ENCODE measurements at regions of chr3 and their contacts with region 1.

Region 1: DNA sequence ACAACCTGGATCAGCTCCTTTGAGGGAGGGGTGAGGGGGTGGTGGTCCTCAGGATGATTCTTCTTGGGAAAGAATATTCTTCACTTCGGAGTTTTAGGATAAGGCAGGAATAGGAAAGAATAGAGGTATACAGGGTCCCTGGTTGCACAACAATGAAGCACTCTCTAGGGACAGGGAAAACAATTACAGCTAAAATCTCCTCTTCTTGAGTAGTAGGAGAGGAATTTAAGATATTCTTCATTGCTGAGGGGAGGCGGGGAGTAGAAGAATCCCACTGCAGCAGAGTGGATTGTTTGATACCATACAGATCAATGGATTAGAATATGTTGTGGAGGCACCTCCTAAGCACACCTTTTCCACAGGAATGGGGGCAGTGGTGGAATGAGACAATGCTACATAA is 20.5 kb downstream of the SLC9C1 start:
- DNase-seq: no peak
- ATAC-seq: no peak
- H3K4me3 ChIP-seq: no peak overlapping the region
- H3K27ac ChIP-seq: no peak overlapping the region
- H3K4me1 ChIP-seq: no peaks in the 10 kb centered on the region
- H3K27me3 ChIP-seq: peaks cover 6% of the 10 kb centered on the region
- CTCF ChIP-seq: no peak
- POLR2A ChIP-seq: no peak
- RAD21 ChIP-seq: no peak

Region 2: DNA sequence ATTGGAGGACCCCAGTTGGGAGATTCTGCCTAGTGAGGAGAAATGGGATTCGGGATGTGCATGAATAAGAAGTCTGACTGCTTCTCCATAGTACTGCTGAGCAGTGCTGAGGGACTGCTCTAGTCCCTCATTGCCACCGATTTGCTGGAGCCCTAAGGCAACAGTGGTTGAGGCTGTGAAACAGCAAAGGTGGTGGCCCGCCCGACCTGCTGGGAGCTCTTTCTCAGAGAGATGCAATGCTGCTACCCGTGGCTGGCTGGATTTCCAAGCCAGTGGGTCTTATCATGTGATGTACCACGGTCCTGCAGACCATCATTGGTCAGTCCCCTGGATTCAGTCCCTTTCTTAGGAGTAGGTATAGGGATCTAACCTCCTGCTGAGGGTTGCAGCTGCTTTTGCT is 97.9 kb before region 1 on chr3:
- CTCF ChIA-PET with region 1: no interaction called
- POLR2A ChIA-PET with region 1: no interaction called
- dilution Hi-C with region 1: no loop called
- in situ Hi-C with region 1: no loop called
- intact Hi-C with region 1: no loop called
- DNase-seq: no peak
- ATAC-seq: no peak
- H3K4me3 ChIP-seq: no peak overlapping the region
- H3K27ac ChIP-seq: no peak overlapping the region
- H3K4me1 ChIP-seq: no peaks in the 10 kb centered on the region
- H3K27me3 ChIP-seq: no peaks in the 10 kb centered on the region
- CTCF ChIP-seq: no peak
- POLR2A ChIP-seq: no peak
- RAD21 ChIP-seq: no peak

Region 3: GRCh38 chr3:112247900-112248299 is 25.6 kb before region 1 on chr3:
- CTCF ChIA-PET with region 1: no interaction called
- POLR2A ChIA-PET with region 1: no interaction called
- dilution Hi-C with region 1: no loop called
- in situ Hi-C with region 1: no loop called
- intact Hi-C with region 1: no loop called
- DNase-seq: no peak
- ATAC-seq: no peak
- H3K4me3 ChIP-seq: no peak overlapping the region
- H3K27ac ChIP-seq: no peak overlapping the region
- H3K4me1 ChIP-seq: no peaks in the 10 kb centered on the region
- H3K27me3 ChIP-seq: no peaks in the 10 kb centered on the region
- CTCF ChIP-seq: no peak
- POLR2A ChIP-seq: no peak
- RAD21 ChIP-seq: no peak

Region 4: GRCh38 chr3:112261742-112262141 is 11.8 kb before region 1 on chr3:
- CTCF ChIA-PET with region 1: no interaction called
- POLR2A ChIA-PET with region 1: no interaction called
- dilution Hi-C with region 1: no loop called
- in situ Hi-C with region 1: no loop called
- intact Hi-C with region 1: loop called (anchors 1 kb)
- DNase-seq: no peak
- ATAC-seq: no peak
- H3K4me3 ChIP-seq: no peak overlapping the region
- H3K27ac ChIP-seq: no peak overlapping the region
- H3K4me1 ChIP-seq: no peaks in the 10 kb centered on the region
- H3K27me3 ChIP-seq: no peaks in the 10 kb centered on the region; the same call in 1 of the 2 replicates
- CTCF ChIP-seq: no peak
- POLR2A ChIP-seq: no peak
- RAD21 ChIP-seq: no peak

Region 5: DNA sequence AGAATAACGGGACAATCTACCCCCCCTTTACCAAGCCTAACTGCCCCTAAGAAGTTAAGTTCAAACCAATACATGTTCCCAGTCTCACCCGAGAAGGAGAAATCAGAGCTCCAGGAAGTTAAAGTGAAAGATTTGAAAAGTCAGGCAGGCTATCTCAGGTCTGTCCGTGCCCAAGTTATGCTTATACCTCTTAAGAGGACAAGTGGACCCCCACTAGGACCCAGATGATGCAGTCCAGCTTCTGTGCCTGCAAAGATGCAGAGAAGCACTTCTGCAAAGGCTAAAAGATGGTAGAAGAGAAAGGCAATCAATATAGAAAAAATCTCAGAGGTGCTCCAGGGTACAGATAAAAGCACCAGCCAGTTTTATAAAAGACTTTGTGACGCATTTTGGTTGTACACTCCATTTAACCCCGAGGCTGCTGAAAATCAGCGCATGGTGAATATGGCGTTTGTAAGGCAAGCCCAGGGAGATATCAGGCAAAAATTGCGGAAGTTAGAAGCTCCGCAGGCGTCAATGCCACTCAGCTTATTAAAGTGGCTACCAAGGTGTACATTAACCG is 30.3 kb after region 1 on chr3:
- CTCF ChIA-PET with region 1: no interaction called
- POLR2A ChIA-PET with region 1: no interaction called
- dilution Hi-C with region 1: no loop called
- in situ Hi-C with region 1: no loop called
- intact Hi-C with region 1: no loop called
- DNase-seq: peak; percentile 28
- ATAC-seq: peak; percentile 64
- H3K4me3 ChIP-seq: peak overlapping the region; percentile 27; the same call in 1 of the 2 replicates
- H3K27ac ChIP-seq: no peak overlapping the region
- H3K4me1 ChIP-seq: peaks cover 12% of the 10 kb centered on the region
- H3K27me3 ChIP-seq: no peaks in the 10 kb centered on the region
- CTCF ChIP-seq: no peak
- POLR2A ChIP-seq: no peak
- RAD21 ChIP-seq: no peak

Region 6: DNA sequence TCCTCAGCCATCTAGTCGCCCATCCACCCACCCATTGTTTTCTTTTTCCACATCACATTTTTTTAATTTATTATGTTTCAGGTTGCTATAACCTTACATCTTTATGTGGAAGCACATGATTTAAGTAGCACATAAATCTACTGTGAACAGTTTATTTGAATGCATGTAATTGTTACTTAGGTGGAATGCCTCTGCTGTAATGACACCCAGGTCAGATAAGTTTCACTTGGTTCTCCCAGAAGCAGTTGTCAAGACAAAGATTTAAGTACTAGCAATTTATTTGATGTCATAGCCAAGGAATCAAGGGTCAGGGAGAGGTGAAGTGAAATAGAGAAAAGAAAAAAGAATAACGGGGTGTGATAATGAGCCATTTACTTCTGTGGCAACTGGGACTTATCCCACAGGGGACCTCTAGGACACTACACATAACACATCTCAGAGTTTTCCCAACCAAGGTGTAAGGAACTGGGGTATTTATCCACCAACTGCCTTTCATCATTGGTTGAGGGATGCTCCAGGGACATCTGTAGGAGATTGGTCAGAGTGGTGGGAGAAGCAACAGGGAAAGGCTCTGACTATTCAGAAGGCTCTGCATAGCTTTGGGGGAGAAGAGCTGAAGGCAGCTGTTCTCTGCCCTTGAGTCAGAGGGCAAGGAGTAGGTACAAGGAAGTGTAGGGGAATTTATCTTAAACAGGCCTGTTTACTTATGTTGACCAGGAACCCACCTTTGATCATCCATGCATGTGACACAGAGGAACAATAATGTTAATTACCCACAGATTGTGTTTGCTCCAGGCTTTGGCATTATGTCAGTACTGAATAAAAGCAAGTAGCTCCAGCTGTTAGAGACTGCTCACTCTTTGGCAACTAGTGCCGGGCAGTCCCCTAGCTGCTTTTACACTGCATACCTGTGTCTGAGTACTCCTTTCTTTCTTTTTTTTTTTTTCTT is 478.3 kb after region 1 on chr3:
- CTCF ChIA-PET with region 1: no interaction called
- POLR2A ChIA-PET with region 1: no interaction called
- dilution Hi-C with region 1: no loop called
- in situ Hi-C with region 1: no loop called
- intact Hi-C with region 1: no loop called
- DNase-seq: peak; percentile 20
- ATAC-seq: no peak
- H3K4me3 ChIP-seq: no peak overlapping the region
- H3K27ac ChIP-seq: no peak overlapping the region
- H3K4me1 ChIP-seq: no peaks in the 10 kb centered on the region; the same call in 1 of the 2 replicates
- H3K27me3 ChIP-seq: no peaks in the 10 kb centered on the region
- CTCF ChIP-seq: no peak
- POLR2A ChIP-seq: no peak
- RAD21 ChIP-seq: no peak